Transverse colon (tissue), 4 donors: ENCODE measurements at regions of chr7 and their contacts with region 1.

Region 1: GRCh38 chr7:21828846-21829245 is 116.9 kb downstream of the CDCA7L start:
- DNase-seq: no peak
- H3K4me3 ChIP-seq: no peak overlapping the region
- H3K27ac ChIP-seq: no peak overlapping the region
- H3K4me1 ChIP-seq: no peaks in the 10 kb centered on the region
- H3K27me3 ChIP-seq: no peaks in the 10 kb centered on the region
- CTCF ChIP-seq: no peak
- EP300 ChIP-seq: no peak
- POLR2A ChIP-seq: no peak

Region 2: GRCh38 chr7:21763818-21764217 is 65.0 kb before region 1 on chr7:
- in situ Hi-C with region 1: no loop called
- intact Hi-C with region 1: no loop called
- DNase-seq: no peak
- H3K4me3 ChIP-seq: no peak overlapping the region
- H3K27ac ChIP-seq: no peak overlapping the region
- H3K4me1 ChIP-seq: no peaks in the 10 kb centered on the region
- H3K27me3 ChIP-seq: no peaks in the 10 kb centered on the region
- CTCF ChIP-seq: no peak
- EP300 ChIP-seq: no peak
- POLR2A ChIP-seq: no peak

Region 3: GRCh38 chr7:21806388-21806787 is 22.5 kb before region 1 on chr7:
- in situ Hi-C with region 1: no loop called
- intact Hi-C with region 1: loop called (anchors 1 kb)
- DNase-seq: no peak
- H3K4me3 ChIP-seq: no peak overlapping the region
- H3K27ac ChIP-seq: no peak overlapping the region
- H3K4me1 ChIP-seq: no peaks in the 10 kb centered on the region
- H3K27me3 ChIP-seq: no peaks in the 10 kb centered on the region
- CTCF ChIP-seq: no peak
- EP300 ChIP-seq: no peak
- POLR2A ChIP-seq: no peak